ENCODE measurements at regions of chr2 and their contacts with region 1.

Region 1: DNA sequence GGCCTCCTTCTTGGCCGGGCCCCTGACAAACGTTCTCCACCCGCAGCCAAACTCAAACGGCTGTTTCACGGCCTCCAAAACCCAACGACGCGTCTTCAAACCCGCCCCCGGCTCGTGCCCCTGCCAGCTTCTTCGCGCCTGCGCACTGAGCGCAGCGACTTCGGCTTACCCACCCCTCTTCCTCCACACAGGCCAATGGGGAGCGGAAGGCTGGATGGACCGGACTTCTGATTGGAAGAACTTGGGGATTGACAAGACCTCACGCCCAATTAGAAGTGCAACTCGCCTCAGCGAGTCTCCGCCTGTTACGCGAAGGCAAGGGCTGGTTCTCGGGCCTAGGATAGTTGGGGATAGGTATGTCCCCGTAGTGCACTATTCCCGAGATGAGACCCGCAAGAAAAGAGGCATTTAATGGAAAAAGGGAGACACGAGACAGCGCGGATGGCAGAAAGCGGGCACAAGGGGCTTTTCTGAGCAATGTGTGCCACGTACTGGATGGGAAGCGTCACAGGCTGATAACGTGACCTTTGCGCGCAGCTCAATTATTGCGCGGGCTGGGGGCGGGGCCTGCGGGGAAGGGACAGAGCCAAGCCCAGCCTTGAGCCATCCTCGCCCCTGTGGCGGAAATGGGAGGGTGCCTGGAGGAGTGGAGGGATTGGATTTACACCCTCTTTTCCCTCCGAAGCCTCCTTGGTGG is at the start of gene LAPTM4A:
- DNase-seq: peak; percentile 91
- ATAC-seq: peak; percentile 90
- H3K4me3 Mint-ChIP-seq: no peak within 1 kb of the TSS
- H3K27ac Mint-ChIP-seq: no peak within 1 kb of the TSS
- H3K4me1 Mint-ChIP-seq: peaks cover 29% of the 10 kb centered on the region
- H3K27me3 Mint-ChIP-seq: peaks cover 14% of the 10 kb centered on the region
- CTCF ChIP-seq: no peak
- total RNA-seq, gene LAPTM4A: 47.2 and 48.8 TPM in 2 replicates

Region 2: DNA sequence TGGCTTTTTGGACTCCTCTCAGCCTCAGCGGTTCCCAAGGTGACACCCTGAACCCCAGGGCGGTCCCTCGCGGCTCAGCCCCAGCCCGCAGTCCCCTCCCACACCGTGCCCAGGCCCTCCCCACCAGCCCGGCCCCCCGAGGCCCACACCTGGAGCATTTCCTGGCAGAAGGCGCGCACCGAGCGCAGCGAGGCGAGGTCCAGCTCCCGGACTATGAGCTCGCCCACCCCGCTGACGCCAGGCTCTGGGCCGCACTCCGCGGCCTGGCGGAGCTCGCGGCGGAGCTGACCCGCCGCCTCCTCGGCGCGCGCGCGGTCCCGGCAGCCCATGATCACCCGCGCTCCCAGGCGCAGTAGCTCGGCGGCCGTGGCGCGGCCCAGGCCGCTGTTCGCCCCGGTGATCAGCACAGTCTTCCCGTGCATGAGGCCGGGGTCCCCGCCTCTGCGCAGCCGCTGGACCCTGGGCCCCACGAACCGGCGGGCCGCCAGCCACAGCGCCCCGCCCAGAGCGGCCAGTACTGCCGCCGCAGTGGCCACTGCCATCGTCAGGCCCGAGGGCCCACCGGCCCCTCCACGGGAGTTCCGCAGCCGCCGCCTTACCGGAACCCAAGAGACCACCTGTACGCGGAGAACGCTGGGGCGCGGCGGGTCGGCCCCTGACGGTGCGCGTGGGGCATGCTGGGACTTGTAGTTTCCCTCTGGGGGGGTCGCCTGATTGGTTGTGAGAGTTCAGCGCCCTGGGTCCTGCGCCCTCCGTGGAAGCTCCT is 1491.5 kb before region 1 on chr2 and contains the start of gene RDH14:
- CTCF ChIA-PET with region 1: no interaction called
- POLR2A ChIA-PET with region 1: interaction called, 4 read pairs
- intact Hi-C with region 1: loop called (anchors 1 kb)
- DNase-seq: peak; percentile 91
- ATAC-seq: peak; percentile 92
- H3K4me3 Mint-ChIP-seq: peak within 1 kb of the TSS; percentile 92
- H3K27ac Mint-ChIP-seq: peak within 1 kb of the TSS; percentile 91
- H3K4me1 Mint-ChIP-seq: peaks cover 32% of the 10 kb centered on the region
- H3K27me3 Mint-ChIP-seq: no peaks in the 10 kb centered on the region
- CTCF ChIP-seq: no peak
- total RNA-seq, gene RDH14: 18.7 and 19.6 TPM in 2 replicates

Region 3: GRCh38 chr2:19901442-19902215 is 150.1 kb before region 1 on chr2 and contains the start of gene TTC32:
- CTCF ChIA-PET with region 1: no interaction called
- POLR2A ChIA-PET with region 1: interaction called, 11 read pairs
- intact Hi-C with region 1: loop called (anchors 1 kb)
- DNase-seq: peak; percentile 91
- ATAC-seq: peak; percentile 91
- H3K4me3 Mint-ChIP-seq: peak within 1 kb of the TSS; percentile 99
- H3K27ac Mint-ChIP-seq: peak within 1 kb of the TSS; percentile 99
- H3K4me1 Mint-ChIP-seq: peaks cover 44% of the 10 kb centered on the region
- H3K27me3 Mint-ChIP-seq: peaks cover 7% of the 10 kb centered on the region
- CTCF ChIP-seq: no peak
- total RNA-seq, gene TTC32: 18.4 and 22.8 TPM in 2 replicates

Region 4: GRCh38 chr2:20015472-20016083 is 36.1 kb before region 1 on chr2:
- CTCF ChIA-PET with region 1: interaction called, 18 read pairs
- POLR2A ChIA-PET with region 1: interaction called, 9 read pairs
- intact Hi-C with region 1: loop called (anchors 1 kb)
- DNase-seq: no peak
- ATAC-seq: peak; percentile 40
- H3K4me3 Mint-ChIP-seq: no peak overlapping the region
- H3K27ac Mint-ChIP-seq: no peak overlapping the region
- H3K4me1 Mint-ChIP-seq: peaks cover 12% of the 10 kb centered on the region
- H3K27me3 Mint-ChIP-seq: peaks cover 27% of the 10 kb centered on the region
- CTCF ChIP-seq: no peak

Region 5: GRCh38 chr2:20027705-20028434 is 23.8 kb before region 1 on chr2:
- CTCF ChIA-PET with region 1: no interaction called
- POLR2A ChIA-PET with region 1: no interaction called
- intact Hi-C with region 1: no loop called
- DNase-seq: no peak
- ATAC-seq: no peak
- H3K4me3 Mint-ChIP-seq: no peak overlapping the region
- H3K27ac Mint-ChIP-seq: no peak overlapping the region
- H3K4me1 Mint-ChIP-seq: no peaks in the 10 kb centered on the region
- H3K27me3 Mint-ChIP-seq: no peaks in the 10 kb centered on the region
- CTCF ChIP-seq: no peak

Region 6: GRCh38 chr2:20097879-20098714 is 46.4 kb after region 1 on chr2:
- CTCF ChIA-PET with region 1: interaction called, 3 read pairs
- POLR2A ChIA-PET with region 1: interaction called, 8 read pairs
- intact Hi-C with region 1: loop called (anchors 1 kb)
- DNase-seq: peak; percentile 62
- ATAC-seq: peak; percentile 95
- H3K4me3 Mint-ChIP-seq: no peak overlapping the region
- H3K27ac Mint-ChIP-seq: no peak overlapping the region
- H3K4me1 Mint-ChIP-seq: no peaks in the 10 kb centered on the region
- H3K27me3 Mint-ChIP-seq: peaks cover 12% of the 10 kb centered on the region
- CTCF ChIP-seq: peak; percentile 96

Region 7: DNA sequence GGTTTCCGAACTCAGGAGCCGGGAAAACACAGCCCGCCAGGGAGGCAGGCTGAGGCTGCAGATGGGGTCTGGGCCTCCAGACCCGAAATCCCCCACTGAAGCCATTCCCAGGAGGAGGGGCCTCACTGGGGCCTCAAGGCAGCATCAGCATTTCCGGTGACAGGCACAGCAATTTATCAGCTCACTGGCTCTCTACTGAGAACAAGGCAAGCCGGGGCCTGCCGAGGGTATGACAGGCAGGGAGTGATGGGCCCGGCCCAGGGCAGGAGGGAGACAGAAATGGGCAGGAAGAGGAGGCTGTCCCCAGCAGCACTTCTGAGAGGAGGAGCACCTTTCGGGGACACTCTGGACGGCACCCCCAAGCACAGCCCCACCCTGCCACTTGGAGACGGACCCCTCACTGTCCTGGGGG is 160.8 kb after region 1 on chr2:
- CTCF ChIA-PET with region 1: no interaction called
- POLR2A ChIA-PET with region 1: no interaction called
- intact Hi-C with region 1: no loop called
- DNase-seq: no peak
- ATAC-seq: no peak
- H3K4me3 Mint-ChIP-seq: no peak overlapping the region
- H3K27ac Mint-ChIP-seq: no peak overlapping the region
- H3K4me1 Mint-ChIP-seq: no peaks in the 10 kb centered on the region
- H3K27me3 Mint-ChIP-seq: peaks cover 2% of the 10 kb centered on the region
- CTCF ChIP-seq: no peak

Region 8: DNA sequence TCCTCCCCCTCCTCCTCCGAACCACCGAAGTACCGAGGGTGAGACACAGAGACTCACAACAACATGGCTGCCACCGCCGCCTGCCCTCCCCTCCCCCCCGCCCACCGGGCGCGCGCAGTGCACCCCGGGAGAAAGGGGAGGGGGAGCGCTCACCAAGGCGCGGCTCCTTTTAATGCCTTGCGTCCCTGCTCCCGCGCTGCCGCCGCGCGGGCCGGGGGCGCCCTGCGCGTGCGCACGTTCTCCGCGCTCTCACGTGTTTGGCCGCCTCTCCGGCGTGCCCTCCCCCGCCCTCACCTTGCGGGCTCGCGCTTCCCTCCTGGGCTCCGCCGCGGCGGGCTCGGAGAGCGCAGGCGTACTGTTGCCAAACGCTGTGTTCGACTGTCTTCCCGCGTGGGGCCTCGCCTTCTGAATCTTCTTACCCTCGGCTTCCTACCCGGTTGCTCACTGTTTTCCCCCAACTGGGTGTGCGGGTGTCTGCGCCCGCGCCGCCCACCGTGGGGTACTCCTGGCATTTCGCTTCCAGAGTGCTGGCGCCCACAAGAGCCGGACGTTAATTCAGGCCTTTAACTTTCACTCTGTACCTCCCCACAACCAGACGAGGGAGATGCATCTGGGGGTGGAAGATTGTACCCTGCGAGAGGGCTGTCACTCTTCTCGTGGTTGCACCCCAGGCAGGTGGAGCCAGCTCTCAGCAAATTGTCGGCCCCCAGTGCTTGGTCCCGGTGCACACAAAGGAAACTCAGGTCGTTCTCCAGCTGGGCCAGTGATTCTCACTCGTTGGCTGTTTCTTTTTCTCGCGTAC is 299.3 kb after region 1 on chr2 and contains the start of gene PUM2:
- CTCF ChIA-PET with region 1: no interaction called
- POLR2A ChIA-PET with region 1: interaction called, 4 read pairs
- intact Hi-C with region 1: loop called (anchors 1 kb)
- DNase-seq: peak; percentile 96
- ATAC-seq: peak; percentile 83
- H3K4me3 Mint-ChIP-seq: peak within 1 kb of the TSS; percentile 92
- H3K27ac Mint-ChIP-seq: peak within 1 kb of the TSS; percentile 86
- H3K4me1 Mint-ChIP-seq: peaks cover 38% of the 10 kb centered on the region
- H3K27me3 Mint-ChIP-seq: no peaks in the 10 kb centered on the region
- CTCF ChIP-seq: no peak
- total RNA-seq, gene PUM2: 94.9 and 110 TPM in 2 replicates

Region 9: GRCh38 chr2:20822535-20823490 is 771.1 kb after region 1 on chr2 and contains the start of gene LDAH:
- CTCF ChIA-PET with region 1: no interaction called
- POLR2A ChIA-PET with region 1: interaction called, 3 read pairs
- intact Hi-C with region 1: loop called (anchors 2 kb)
- DNase-seq: peak; percentile 84
- ATAC-seq: peak; percentile 83
- H3K4me3 Mint-ChIP-seq: peak within 1 kb of the TSS; percentile 97
- H3K27ac Mint-ChIP-seq: peak within 1 kb of the TSS; percentile 97
- H3K4me1 Mint-ChIP-seq: peaks cover 21% of the 10 kb centered on the region
- H3K27me3 Mint-ChIP-seq: no peaks in the 10 kb centered on the region
- CTCF ChIP-seq: no peak
- total RNA-seq, gene LDAH: 31.2 and 31.7 TPM in 2 replicates

Measured in activated B cell treated with CpG ODN at 0.5 μM for 24 hours (primary cell).